ENCODE measurements at regions of chr19 and their contacts with region 1.

Region 1: DNA sequence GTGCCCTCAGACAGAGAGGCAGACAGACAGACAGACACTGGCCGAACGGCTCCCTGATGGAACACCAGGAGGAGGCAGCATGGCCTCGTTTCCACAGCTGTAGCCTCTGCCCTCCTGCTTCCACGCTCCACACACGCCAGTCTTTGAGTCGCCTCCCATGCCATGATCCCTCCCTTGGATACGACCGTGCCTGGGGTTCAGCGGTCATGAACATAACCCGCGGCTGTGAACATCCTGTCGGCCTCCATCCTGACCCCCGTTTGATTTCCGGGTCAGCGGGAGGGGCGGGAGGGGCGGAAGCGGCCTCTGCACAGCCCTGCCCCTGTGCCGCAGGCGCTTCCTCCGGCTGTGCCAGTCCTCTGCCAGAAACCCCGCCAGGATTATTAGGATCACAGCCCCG is 23.3 kb downstream of the GP6 start:
- DNase-seq: peak; percentile 31
- H3K4me3 ChIP-seq: no peak overlapping the region
- H3K27ac ChIP-seq: no peak overlapping the region
- H3K4me1 ChIP-seq: peaks cover 10% of the 10 kb centered on the region
- H3K27me3 ChIP-seq: no peaks in the 10 kb centered on the region
- CTCF ChIP-seq: peak in 1 of 2 donors; percentile 28
- POLR2A ChIP-seq: peak; percentile 21

Region 2: DNA sequence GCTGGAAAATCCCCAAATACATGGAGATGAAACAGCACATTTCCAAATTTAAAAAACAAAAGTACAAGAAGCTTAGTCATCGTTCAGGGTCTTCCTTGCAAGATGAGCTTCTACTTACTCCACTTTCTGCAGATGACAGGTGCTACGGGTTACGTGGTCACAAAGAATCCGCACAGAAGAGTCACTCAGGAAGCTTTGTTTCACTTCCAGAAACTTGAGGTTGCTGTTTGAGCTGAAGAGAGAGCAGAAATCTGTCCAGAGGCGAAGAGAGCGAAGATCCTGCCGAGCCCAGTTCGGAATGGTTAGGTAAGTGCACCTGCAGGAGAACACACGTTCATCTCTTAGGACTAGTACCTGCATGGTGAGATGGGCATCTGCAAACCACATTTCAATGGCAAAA is 76.8 kb before region 1 on chr19:
- CTCF ChIA-PET with region 1: no interaction called
- POLR2A ChIA-PET with region 1: no interaction called
- dilution Hi-C with region 1: no loop called
- intact Hi-C with region 1: no loop called
- DNase-seq: no peak
- H3K4me3 ChIP-seq: no peak overlapping the region
- H3K27ac ChIP-seq: no peak overlapping the region
- H3K4me1 ChIP-seq: no peaks in the 10 kb centered on the region
- H3K27me3 ChIP-seq: no peaks in the 10 kb centered on the region
- CTCF ChIP-seq: no peak
- POLR2A ChIP-seq: no peak

Region 3: DNA sequence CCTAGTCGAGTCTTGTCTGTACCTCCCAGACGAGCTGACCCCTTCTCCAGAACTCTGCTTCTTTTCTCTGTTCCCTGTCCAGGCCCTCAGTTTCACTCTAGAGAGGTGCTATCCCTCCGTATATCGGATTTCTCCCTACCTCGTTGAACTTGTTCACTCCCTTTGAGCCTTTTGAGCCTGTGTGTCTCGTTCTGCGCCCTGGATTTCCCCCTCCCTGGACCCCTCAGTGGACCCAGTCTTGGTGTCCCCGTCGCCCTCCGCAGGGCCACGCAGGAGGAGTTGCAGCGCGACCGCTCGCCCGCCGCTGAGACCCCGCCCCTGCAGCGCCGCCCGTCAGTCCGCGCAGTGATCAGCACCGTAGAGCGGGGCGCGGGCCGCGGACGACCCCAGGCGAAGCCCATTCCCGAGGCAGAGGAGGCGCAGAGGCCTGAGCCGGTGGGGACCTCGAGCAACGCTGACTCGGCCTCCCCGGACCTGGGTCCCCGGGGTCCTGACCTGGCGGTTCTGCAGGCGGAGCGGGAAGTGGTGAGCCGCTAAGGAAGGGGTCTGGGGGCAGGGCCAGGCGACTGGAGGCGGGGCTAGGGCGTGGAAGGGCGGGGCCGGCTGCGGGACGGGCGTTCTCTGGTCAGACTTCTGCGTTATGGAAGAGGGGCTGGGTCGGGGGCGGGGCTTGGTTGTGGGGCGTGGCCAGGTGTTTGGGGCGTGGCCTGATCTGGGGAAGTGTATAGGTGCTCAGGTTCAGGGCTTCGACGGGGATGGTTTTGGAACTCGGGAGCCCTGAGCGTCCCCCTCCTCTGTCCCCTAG is 66.5 kb after region 1 on chr19:
- CTCF ChIA-PET with region 1: no interaction called
- POLR2A ChIA-PET with region 1: no interaction called
- dilution Hi-C with region 1: no loop called
- intact Hi-C with region 1: loop called (anchors 2 kb)
- DNase-seq: peak; percentile 89
- H3K4me3 ChIP-seq: peak overlapping the region; percentile 55 to 67 (median 58)
- H3K27ac ChIP-seq: no peak overlapping the region
- H3K4me1 ChIP-seq: peaks cover 20% of the 10 kb centered on the region
- H3K27me3 ChIP-seq: peaks cover 0 to 3% of the 10 kb centered on the region in 2 experiments
- CTCF ChIP-seq: no peak
- POLR2A ChIP-seq: no peak

Measured in endothelial cell of umbilical vein (primary cell).